Ovary (tissue), 10 donors: ENCODE measurements at regions of chr20 and their contacts with region 1.

Region 1: GRCh38 chr20:50189681-50190582 is 698 bp upstream of the CEBPB start:
- DNase-seq: peak; percentile 93 to 96 (median 95)
- H3K4me3 ChIP-seq: peak overlapping the region; percentile 74
- H3K27ac ChIP-seq: peak overlapping the region; percentile 91 to 98
- H3K4me1 ChIP-seq: peaks cover 11% of the 10 kb centered on the region
- H3K27me3 ChIP-seq: no peaks in the 10 kb centered on the region
- CTCF ChIP-seq: peak; percentile 72 to 96 (median 84)
- EP300 ChIP-seq: no peak
- POLR2A ChIP-seq: peak; percentile 4

Region 2: GRCh38 chr20:50133474-50134217 is 56.3 kb before region 1 on chr20:
- intact Hi-C with region 1: no loop called
- DNase-seq: no peak
- H3K4me3 ChIP-seq: no peak overlapping the region
- H3K27ac ChIP-seq: no peak overlapping the region
- H3K4me1 ChIP-seq: peaks cover 6% of the 10 kb centered on the region
- H3K27me3 ChIP-seq: no peaks in the 10 kb centered on the region
- CTCF ChIP-seq: no peak
- EP300 ChIP-seq: no peak
- POLR2A ChIP-seq: no peak

Region 3: GRCh38 chr20:50224531-50225255 is 34.8 kb after region 1 on chr20:
- intact Hi-C with region 1: loop called in 1 of 4 experiments (anchors 2 kb)
- DNase-seq: peak; percentile 80 to 91 (median 86)
- H3K4me3 ChIP-seq: no peak overlapping the region
- H3K27ac ChIP-seq: peak overlapping the region; percentile 84 to 89
- H3K4me1 ChIP-seq: peaks cover 11% of the 10 kb centered on the region
- H3K27me3 ChIP-seq: no peaks in the 10 kb centered on the region
- CTCF ChIP-seq: peak; percentile 1 to 51 (median 39)
- EP300 ChIP-seq: peak; percentile 88
- POLR2A ChIP-seq: peak; percentile 33

Region 4: DNA sequence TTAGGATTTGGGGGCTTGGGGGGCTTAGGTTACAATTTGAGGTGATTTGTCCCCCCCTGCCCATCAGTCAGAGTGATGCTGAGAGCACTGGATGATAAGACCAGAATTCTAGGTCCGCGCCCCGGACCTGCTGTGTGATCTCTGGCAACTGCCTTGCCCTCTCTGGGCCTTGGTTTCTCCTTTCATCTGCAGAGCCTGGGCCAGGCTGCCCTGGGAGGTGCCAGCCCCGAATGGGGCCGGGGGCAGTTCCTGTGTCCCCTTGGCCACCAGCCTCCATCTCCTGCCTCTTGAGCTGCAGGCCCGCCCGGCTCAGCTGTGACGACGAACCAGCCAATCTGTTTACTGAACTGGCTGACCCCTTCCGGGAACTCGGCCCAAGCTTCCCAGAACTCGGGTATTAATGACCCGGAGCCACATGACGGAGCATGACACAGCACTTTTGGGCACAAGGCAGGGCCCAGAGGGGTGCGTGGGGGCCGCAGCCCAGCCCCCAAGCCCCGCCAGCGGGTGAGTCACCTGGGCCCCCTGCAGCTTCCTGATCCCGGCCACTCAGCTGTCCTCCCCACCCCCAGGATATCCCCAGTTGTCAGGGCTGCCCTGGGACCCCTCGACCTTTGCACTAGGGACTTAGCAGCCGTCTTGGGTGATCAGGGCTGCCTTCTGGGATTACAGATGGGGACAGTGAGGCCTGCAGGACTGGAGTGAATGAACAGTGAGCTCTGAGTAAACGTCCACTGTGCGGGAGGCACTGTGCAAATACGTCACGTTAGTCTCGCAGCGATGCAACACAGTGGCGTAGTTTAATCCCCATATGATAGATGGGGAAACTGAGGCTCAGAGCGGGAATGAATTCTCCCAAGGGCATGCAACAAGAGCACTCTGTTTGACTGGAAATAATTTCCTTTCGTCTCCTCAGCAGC is 102.7 kb after region 1 on chr20:
- intact Hi-C with region 1: loop called in 1 of 4 experiments (anchors 5 kb)
- DNase-seq: peak; percentile 98 to 99 (median 99)
- H3K4me3 ChIP-seq: no peak overlapping the region
- H3K27ac ChIP-seq: peak overlapping the region; percentile 67 to 88
- H3K4me1 ChIP-seq: peaks cover 13% of the 10 kb centered on the region
- H3K27me3 ChIP-seq: no peaks in the 10 kb centered on the region
- CTCF ChIP-seq: no peak
- EP300 ChIP-seq: peak; percentile 100
- POLR2A ChIP-seq: peak; percentile 42

Region 5: GRCh38 chr20:50379049-50379990 is 189.4 kb after region 1 on chr20:
- intact Hi-C with region 1: loop called in 3 of 4 experiments (anchors 2 to 10 kb)
- DNase-seq: peak; percentile 92 to 98 (median 95)
- H3K4me3 ChIP-seq: no peak overlapping the region
- H3K27ac ChIP-seq: peak overlapping the region; percentile 41 to 49
- H3K4me1 ChIP-seq: peaks cover 15% of the 10 kb centered on the region
- H3K27me3 ChIP-seq: no peaks in the 10 kb centered on the region
- CTCF ChIP-seq: peak in 1 of 3 donors; percentile 26
- EP300 ChIP-seq: no peak
- POLR2A ChIP-seq: peak; percentile 82

Region 6: GRCh38 chr20:50575847-50576720 is 386.2 kb after region 1 on chr20:
- intact Hi-C with region 1: loop called (anchors 2 to 5 kb)
- DNase-seq: peak; percentile 70 to 80 (median 74)
- H3K4me3 ChIP-seq: no peak overlapping the region
- H3K27ac ChIP-seq: no peak overlapping the region
- H3K4me1 ChIP-seq: peaks cover 12% of the 10 kb centered on the region
- H3K27me3 ChIP-seq: no peaks in the 10 kb centered on the region
- CTCF ChIP-seq: peak; percentile 45 to 71 (median 47)
- EP300 ChIP-seq: no peak
- POLR2A ChIP-seq: no peak

Region 7: GRCh38 chr20:51393571-51393970 is 1203.6 kb after region 1 on chr20:
- intact Hi-C with region 1: loop called in 1 of 4 experiments (anchors 10 kb)
- DNase-seq: no peak
- H3K4me3 ChIP-seq: no peak overlapping the region
- H3K27ac ChIP-seq: no peak overlapping the region
- H3K4me1 ChIP-seq: peaks cover 4% of the 10 kb centered on the region
- H3K27me3 ChIP-seq: no peaks in the 10 kb centered on the region
- CTCF ChIP-seq: no peak
- EP300 ChIP-seq: no peak
- POLR2A ChIP-seq: no peak